WTC11 (cell line): ENCODE measurements at regions of chr11 and their contacts with region 1.

Region 1: GRCh38 chr11:45655347-45655756 is 10.1 kb downstream of the CHST1 start:
- DNase-seq: peak; percentile 93
- ATAC-seq: peak; percentile 73
- H3K4me3 Mint-ChIP-seq: no peak overlapping the region; the same call in 1 of the 2 replicates
- H3K27ac Mint-ChIP-seq: no peak overlapping the region; the same call in 1 of the 2 replicates
- H3K4me1 Mint-ChIP-seq: peaks cover 31% of the 10 kb centered on the region
- H3K27me3 Mint-ChIP-seq: no peaks in the 10 kb centered on the region; the same call in 1 of the 2 replicates
- CTCF ChIP-seq: peak; percentile 89

Region 2: DNA sequence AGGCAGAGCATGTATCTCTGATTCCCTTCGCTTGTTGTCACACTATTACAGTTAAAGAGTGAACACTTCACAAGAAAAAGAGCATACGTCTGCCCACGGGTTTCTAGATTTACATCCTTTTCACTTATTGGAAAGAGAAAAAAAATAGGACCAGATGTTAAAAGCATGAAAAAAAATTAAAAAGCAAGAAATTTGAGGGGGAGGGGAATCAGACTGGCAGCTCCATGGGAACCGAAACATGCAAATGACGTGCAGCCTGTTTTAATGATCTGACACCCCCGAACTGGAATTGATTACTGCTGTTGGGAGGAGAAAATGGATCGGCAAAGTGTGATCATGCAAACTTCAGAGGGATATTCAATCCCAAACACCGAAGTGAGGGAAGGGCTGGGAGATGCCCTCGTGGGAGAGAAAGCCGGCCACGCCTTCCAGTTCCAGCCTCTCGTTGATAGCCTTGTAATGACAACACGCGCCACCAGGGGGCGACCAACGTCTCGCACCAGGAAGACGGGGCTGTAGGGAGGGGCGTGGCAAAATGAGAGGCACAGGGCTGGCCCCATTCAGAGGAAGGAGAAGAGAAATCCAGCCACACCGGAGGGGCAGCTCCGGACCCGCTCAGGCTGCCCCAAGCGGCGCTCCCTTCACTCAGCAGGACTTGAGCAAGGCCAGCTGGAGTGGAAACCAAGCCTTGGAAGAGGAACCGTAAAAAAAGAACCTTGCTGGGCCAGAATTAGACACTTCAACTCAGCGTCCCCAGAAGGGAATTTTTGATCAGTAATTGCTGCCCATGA is 315.4 kb before region 1 on chr11:
- CTCF ChIA-PET with region 1: interaction called, 24 read pairs
- POLR2A ChIA-PET with region 1: no interaction called
- DNase-seq: peak; percentile 98
- ATAC-seq: peak; percentile 99
- H3K4me3 Mint-ChIP-seq: peak overlapping the region; percentile 58
- H3K27ac Mint-ChIP-seq: peak overlapping the region; percentile 26; the same call in 1 of the 2 replicates
- H3K4me1 Mint-ChIP-seq: peaks cover 40% of the 10 kb centered on the region
- H3K27me3 Mint-ChIP-seq: no peaks in the 10 kb centered on the region; the same call in 1 of the 2 replicates
- CTCF ChIP-seq: peak; percentile 95

Region 3: GRCh38 chr11:45400591-45400990 is 254.8 kb before region 1 on chr11:
- CTCF ChIA-PET with region 1: interaction called, 12 read pairs
- POLR2A ChIA-PET with region 1: no interaction called
- DNase-seq: no peak
- ATAC-seq: no peak
- H3K4me3 Mint-ChIP-seq: no peak overlapping the region
- H3K27ac Mint-ChIP-seq: no peak overlapping the region
- H3K4me1 Mint-ChIP-seq: peaks cover 19% of the 10 kb centered on the region
- H3K27me3 Mint-ChIP-seq: no peaks in the 10 kb centered on the region
- CTCF ChIP-seq: no peak

Region 4: DNA sequence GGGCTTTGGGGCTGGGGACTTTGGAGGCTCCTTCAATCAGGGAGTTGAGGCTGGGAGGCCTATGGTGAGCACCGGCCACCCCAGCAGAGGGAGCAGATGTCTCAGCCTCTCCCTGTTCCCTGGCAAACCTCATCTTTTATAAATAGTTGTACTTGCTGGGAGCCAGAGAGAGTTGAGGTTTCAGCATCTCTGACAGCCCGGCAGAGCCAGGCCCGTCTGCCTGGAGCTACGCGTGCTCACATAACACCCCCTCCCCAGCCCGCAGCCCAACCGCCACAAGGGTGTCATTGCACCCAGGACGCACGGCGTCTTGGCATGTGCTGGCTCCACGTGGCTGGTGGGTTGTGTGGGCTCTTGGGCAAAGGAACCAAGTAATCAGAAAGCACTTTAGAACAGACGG is 117.0 kb before region 1 on chr11:
- CTCF ChIA-PET with region 1: interaction called, 11 read pairs
- POLR2A ChIA-PET with region 1: no interaction called
- DNase-seq: no peak
- ATAC-seq: no peak
- H3K4me3 Mint-ChIP-seq: no peak overlapping the region
- H3K27ac Mint-ChIP-seq: no peak overlapping the region
- H3K4me1 Mint-ChIP-seq: no peaks in the 10 kb centered on the region
- H3K27me3 Mint-ChIP-seq: peaks cover 3% of the 10 kb centered on the region
- CTCF ChIP-seq: no peak

Region 5: DNA sequence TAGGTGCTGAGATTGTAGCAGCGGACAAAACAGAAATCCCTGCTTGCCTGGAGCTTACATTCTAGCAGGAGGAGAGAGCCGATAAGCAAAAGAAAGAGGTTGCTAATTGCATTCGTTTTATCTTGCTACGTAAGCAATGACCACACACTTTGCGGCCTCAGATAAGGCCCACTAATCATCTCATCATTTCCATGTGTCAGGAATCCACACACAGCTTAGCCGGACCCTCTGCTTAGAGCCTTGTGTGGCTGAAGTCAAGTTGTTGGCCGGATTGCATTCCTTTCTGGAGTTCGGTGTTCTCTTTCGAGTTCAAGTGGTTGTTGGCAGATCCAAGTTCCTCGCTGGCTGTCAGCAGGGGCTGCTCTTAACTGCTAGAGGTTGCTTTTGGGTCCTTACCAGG is 91.5 kb before region 1 on chr11:
- CTCF ChIA-PET with region 1: interaction called, 12 read pairs
- POLR2A ChIA-PET with region 1: no interaction called
- DNase-seq: no peak
- ATAC-seq: peak; percentile 34; the same call in 1 of the 2 replicates
- H3K4me3 Mint-ChIP-seq: no peak overlapping the region
- H3K27ac Mint-ChIP-seq: no peak overlapping the region
- H3K4me1 Mint-ChIP-seq: peaks cover 25% of the 10 kb centered on the region
- H3K27me3 Mint-ChIP-seq: no peaks in the 10 kb centered on the region; the same call in 1 of the 2 replicates
- CTCF ChIP-seq: no peak

Region 6: GRCh38 chr11:45617871-45618601 is 37.3 kb before region 1 on chr11:
- CTCF ChIA-PET with region 1: interaction called, 20 read pairs
- POLR2A ChIA-PET with region 1: no interaction called
- DNase-seq: no peak
- ATAC-seq: peak; percentile 57
- H3K4me3 Mint-ChIP-seq: no peak overlapping the region
- H3K27ac Mint-ChIP-seq: no peak overlapping the region
- H3K4me1 Mint-ChIP-seq: peaks cover 15% of the 10 kb centered on the region
- H3K27me3 Mint-ChIP-seq: peaks cover 3% of the 10 kb centered on the region; the same call in 1 of the 2 replicates
- CTCF ChIP-seq: no peak

Region 7: DNA sequence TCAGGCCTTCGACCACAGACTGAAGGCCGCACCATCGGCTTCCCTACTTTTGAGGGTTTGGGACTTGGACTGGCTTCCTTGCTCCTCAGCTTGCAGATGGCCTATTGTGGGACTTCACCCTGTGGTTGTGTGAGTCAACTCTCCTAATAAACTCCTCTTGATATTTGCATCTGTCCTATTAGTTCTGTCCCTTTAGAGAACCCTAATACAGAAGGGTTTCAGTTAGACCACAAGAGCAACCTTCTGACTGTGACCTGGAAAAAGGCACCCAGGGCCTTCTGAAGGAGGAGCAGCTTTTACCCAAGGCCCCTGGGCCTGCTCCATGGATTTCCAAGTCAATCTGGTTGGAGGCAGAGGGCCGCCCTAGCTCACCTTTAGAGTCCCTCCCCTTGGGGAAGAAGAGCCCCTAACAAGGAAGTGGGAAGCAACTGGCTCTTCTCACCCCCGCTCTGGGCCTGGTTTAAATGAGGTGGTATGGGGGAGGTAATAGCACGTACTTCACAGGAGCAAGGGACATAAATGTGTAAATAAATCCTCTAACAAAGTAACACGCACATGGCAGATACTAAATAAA is 21.3 kb after region 1 on chr11:
- CTCF ChIA-PET with region 1: interaction called, 12 read pairs
- POLR2A ChIA-PET with region 1: no interaction called
- DNase-seq: no peak
- ATAC-seq: no peak
- H3K4me3 Mint-ChIP-seq: no peak overlapping the region
- H3K27ac Mint-ChIP-seq: no peak overlapping the region
- H3K4me1 Mint-ChIP-seq: 0 out of 2 replicates have a peak, but pooled peaks cover 2% of the 10 kb centered on the region
- H3K27me3 Mint-ChIP-seq: no peaks in the 10 kb centered on the region
- CTCF ChIP-seq: no peak